PC-3 (cell line): ENCODE measurements at regions of chr7 and their contacts with region 1.

Region 1: DNA sequence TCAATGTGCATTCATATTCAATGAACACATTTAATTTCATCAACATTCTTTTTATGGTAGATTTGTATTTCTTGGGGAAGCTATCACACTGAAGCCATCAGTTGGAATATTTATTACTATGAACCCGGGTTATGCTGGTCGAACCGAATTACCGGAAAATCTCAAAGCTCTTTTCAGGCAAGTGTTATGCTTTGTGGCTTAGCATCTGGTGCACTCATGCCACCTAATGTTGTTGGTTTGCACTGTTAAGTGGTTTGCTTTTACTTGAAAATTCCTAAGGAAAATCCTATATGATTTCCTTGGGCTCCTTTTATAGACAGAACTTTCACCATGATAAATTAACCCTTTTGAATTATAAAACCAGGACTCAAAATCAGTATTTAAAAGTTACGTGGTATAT is 147.9 kb downstream of the DNAH11 start:
- DNase-seq: peak; percentile 7
- ATAC-seq: no peak
- H3K4me3 ChIP-seq: no peak overlapping the region
- H3K27ac ChIP-seq: no peak overlapping the region
- H3K4me1 ChIP-seq: no peaks in the 10 kb centered on the region
- H3K27me3 ChIP-seq: peaks cover 7% of the 10 kb centered on the region; the same call in 1 of the 2 replicates
- CTCF ChIP-seq: 0 out of 2 replicates have a peak, but pooled peaks have one; percentile 16

Region 2: DNA sequence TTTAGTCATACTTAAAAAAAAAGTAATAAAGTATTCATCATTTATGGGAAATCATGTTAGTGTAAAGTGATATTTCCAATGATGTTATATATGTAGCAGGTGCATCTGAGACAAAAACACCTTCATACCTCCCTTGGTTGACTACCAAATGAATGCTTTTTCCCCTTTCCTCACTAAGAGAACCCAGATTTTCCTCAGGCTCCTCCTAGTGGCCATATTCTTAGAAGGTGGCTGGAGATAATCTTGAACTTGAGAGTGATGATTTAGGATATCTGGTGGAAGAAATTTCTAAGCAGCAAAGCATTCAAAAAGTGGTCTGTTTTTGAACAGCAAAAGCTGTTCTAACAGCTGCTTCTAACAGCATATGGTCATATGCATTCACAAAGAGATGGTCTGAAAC is 164.7 kb before region 1 on chr7:
- CTCF ChIA-PET with region 1: no interaction called
- POLR2A ChIA-PET with region 1: no interaction called
- intact Hi-C with region 1: loop called (anchors 10 kb)
- DNase-seq: peak; percentile 40
- ATAC-seq: no peak
- H3K4me3 ChIP-seq: no peak overlapping the region
- H3K27ac ChIP-seq: no peak overlapping the region
- H3K4me1 ChIP-seq: no peaks in the 10 kb centered on the region
- H3K27me3 ChIP-seq: no peaks in the 10 kb centered on the region
- CTCF ChIP-seq: peak; percentile 51

Region 3: GRCh38 chr7:21642422-21642821 is 48.3 kb before region 1 on chr7:
- CTCF ChIA-PET with region 1: no interaction called
- POLR2A ChIA-PET with region 1: no interaction called
- intact Hi-C with region 1: no loop called
- DNase-seq: no peak
- ATAC-seq: no peak
- H3K4me3 ChIP-seq: no peak overlapping the region
- H3K27ac ChIP-seq: no peak overlapping the region
- H3K4me1 ChIP-seq: peaks cover 30% of the 10 kb centered on the region
- H3K27me3 ChIP-seq: peaks cover 55% of the 10 kb centered on the region
- CTCF ChIP-seq: no peak

Region 4: DNA sequence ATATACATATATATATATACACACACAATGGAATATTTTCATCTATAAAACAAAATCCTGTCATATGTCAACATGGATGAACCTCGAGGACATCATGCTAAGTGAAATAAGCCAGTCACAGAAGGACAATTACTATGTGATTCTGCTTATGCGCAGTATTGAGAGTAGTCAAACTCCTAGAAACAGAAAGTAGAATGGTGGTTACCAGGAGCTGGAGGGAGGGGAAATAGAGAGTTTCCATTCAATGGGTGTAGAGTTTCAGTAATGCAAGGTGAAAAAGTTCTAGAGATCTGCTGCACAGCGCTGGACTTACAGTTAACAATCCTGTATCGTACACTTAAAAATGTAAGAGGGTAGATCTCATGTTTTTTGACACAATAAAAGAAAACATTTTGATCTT is 73.1 kb after region 1 on chr7:
- CTCF ChIA-PET with region 1: no interaction called
- POLR2A ChIA-PET with region 1: no interaction called
- intact Hi-C with region 1: no loop called
- DNase-seq: no peak
- ATAC-seq: no peak
- H3K4me3 ChIP-seq: no peak overlapping the region
- H3K27ac ChIP-seq: no peak overlapping the region
- H3K4me1 ChIP-seq: peaks cover 7% of the 10 kb centered on the region
- H3K27me3 ChIP-seq: peaks cover 7% of the 10 kb centered on the region
- CTCF ChIP-seq: no peak